Esophagus squamous epithelium (tissue), 5 donors: ENCODE measurements at regions of chr1 and their contacts with region 1.

Region 1: DNA sequence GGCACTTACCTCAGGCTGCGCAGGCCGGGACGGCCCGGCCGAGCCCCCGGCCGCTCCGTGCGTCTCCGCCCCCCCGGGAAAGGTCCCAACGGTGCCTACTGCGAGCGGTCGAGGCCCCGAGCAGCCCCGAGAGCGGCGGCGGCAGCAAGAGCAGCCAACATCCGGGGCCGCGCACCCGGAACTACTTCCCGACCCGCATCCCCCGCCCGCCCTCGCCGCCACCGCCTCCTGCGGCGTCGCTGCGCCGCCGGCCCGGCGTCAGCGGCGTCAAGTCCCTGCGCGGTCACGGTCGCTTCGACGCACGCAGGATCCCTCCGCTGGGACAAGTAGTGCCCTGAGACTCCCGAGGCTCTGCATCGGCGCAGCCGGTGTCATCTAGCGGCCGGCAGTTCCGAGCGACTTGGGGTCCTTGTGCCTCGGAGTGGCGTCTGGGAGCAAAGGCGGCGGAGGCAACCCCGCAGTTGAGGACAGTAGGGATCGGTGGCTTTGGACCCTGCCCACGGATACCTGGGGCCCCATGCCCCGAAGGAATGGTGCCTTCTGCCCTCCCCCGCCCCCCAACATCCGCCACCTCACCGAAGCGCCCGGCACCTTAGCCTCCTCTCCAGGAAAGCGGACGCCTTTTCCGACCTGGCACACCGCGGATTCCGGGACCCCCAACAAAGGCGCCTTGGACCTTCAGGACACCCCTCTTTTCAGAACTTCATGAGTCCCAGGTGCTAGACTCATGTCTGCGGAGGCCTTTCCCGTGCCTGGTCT is at the start of gene FOXJ3:
- DNase-seq: peak; percentile 31
- H3K4me3 ChIP-seq: peak within 1 kb of the TSS; percentile 85 to 100 (median 95)
- H3K27ac ChIP-seq: peak within 1 kb of the TSS; percentile 94 to 97 (median 96)
- H3K4me1 ChIP-seq: peaks cover 17 to 58% (median 17%) of the 10 kb centered on the region in 3 donors
- H3K27me3 ChIP-seq: no peaks in the 10 kb centered on the region
- CTCF ChIP-seq: peak in 2 of 6 experiments; percentile 28 to 29
- POLR2A ChIP-seq: peak in 2 of 4 donors; percentile 60 to 72
- total RNA-seq, gene FOXJ3: 18.7 to 36.6 (median 27.5) TPM

Region 2: DNA sequence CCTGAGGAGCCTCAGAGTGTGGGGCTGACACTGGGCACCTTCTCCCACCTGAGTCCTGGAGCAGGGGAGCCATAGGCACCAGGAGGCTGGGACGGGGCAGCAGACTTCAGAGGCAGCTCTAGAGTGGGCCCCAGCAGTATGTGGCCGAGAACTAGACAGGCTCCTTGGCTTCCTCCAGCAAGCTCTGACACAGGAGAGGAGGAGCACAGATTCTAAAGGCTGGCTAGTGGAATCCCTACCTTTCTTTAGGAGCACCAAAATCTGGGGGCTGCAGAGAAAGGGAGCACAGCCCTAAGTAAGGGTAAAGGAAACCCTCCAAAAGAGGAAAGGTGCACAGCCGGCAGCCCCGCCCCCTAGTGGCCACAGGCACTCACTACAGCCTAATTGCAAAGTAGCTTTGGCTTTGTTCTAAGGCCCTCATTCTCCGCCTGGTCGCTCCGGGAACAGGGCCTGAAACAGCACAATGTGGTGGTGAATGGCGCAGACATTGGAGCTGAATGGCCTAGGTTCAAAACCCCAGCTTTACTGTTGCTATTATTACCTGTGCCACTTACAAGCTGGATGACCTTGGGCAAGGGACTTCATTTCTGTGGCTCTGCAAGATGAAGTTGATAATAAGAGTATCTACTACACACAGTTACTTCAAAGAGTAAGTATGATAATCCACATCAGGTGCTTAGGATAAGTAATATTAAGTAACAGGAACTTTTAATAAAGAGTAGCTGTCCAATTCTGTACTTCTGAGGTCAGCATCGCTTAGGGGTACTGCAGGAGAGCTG is 161.9 kb before region 1 on chr1:
- intact Hi-C with region 1: loop called (anchors 5 kb)
- DNase-seq: no peak
- H3K4me3 ChIP-seq: peak overlapping the region in 2 of 4 donors; percentile 2 to 5
- H3K27ac ChIP-seq: peak overlapping the region; percentile 52 to 75 (median 73)
- H3K4me1 ChIP-seq: peaks cover 29 to 82% (median 57%) of the 10 kb centered on the region in 3 donors
- H3K27me3 ChIP-seq: no peaks in the 10 kb centered on the region
- CTCF ChIP-seq: peak; percentile 90 to 99 (median 93)
- POLR2A ChIP-seq: no peak

Region 3: DNA sequence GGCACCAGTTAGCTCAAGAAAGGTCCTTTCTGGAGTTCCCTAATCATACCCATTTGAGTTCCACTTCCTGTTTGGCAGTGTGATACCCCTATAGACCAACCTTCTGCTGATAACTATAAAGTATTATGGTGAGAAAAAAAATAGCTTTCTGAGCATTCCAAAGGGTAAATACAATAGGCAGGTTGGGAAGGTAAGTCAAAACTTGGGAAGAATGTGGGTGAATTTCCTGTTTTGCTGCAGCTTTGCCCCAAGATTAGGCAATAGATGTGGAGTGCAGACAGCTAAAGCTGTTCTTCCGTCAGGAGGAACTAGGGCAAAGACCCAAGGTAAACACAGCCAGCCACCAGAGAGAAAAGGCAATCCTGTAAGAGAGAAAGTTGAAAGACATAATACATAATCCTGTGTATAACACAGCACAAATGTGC is 120.8 kb before region 1 on chr1:
- intact Hi-C with region 1: loop called (anchors 10 kb)
- DNase-seq: no peak
- H3K4me3 ChIP-seq: no peak overlapping the region
- H3K27ac ChIP-seq: peak overlapping the region in 3 of 4 donors; percentile 47 to 66 (median 55)
- H3K4me1 ChIP-seq: peaks cover 9 to 40% (median 19%) of the 10 kb centered on the region in 3 donors
- H3K27me3 ChIP-seq: no peaks in the 10 kb centered on the region
- CTCF ChIP-seq: no peak
- POLR2A ChIP-seq: no peak

Region 4: DNA sequence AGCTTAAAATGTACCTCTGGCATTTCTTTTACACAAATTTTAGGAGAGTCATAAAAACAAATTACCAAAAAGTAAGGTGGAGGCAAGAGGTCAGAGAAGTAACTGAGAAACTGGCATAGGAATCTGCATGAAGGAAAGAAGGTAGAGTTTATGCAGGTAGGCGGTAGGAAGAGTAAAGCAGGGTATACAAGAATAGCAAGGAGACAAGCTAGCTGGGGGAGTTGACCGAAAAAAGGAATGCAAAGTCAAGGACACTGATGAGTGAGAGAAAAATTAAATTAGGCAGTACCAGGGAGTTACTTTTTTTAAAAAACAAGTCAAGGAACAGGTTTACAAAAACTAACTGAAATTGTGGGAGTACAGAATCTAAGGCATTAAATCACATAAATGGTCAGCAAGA is 56.2 kb before region 1 on chr1:
- intact Hi-C with region 1: no loop called
- DNase-seq: no peak
- H3K4me3 ChIP-seq: no peak overlapping the region
- H3K27ac ChIP-seq: no peak overlapping the region
- H3K4me1 ChIP-seq: peaks cover 0 to 26% (median 0%) of the 10 kb centered on the region in 3 donors
- H3K27me3 ChIP-seq: no peaks in the 10 kb centered on the region
- CTCF ChIP-seq: no peak
- POLR2A ChIP-seq: no peak

Region 5: GRCh38 chr1:42403880-42404400 is 68.7 kb after region 1 on chr1:
- intact Hi-C with region 1: no loop called
- DNase-seq: no peak
- H3K4me3 ChIP-seq: no peak overlapping the region
- H3K27ac ChIP-seq: no peak overlapping the region
- H3K4me1 ChIP-seq: no peaks in the 10 kb centered on the region
- H3K27me3 ChIP-seq: no peaks in the 10 kb centered on the region
- CTCF ChIP-seq: peak in 2 of 6 experiments; percentile 6 to 16
- POLR2A ChIP-seq: no peak